Adrenal gland (tissue), 19 donors: ENCODE measurements at regions of chr5 and their contacts with region 1.

Region 1: GRCh38 chr5:168562279-168562678 is 16.9 kb downstream of the PANK3 start:
- DNase-seq: no peak
- H3K4me3 ChIP-seq: no peak overlapping the region
- H3K27ac ChIP-seq: peak overlapping the region in 1 of 5 donors; percentile 4
- H3K4me1 ChIP-seq: peaks cover 16 to 35% of the 10 kb centered on the region in 2 donors
- H3K27me3 ChIP-seq: no peaks in the 10 kb centered on the region
- CTCF ChIP-seq: no peak
- POLR2A ChIP-seq: no peak

Region 2: DNA sequence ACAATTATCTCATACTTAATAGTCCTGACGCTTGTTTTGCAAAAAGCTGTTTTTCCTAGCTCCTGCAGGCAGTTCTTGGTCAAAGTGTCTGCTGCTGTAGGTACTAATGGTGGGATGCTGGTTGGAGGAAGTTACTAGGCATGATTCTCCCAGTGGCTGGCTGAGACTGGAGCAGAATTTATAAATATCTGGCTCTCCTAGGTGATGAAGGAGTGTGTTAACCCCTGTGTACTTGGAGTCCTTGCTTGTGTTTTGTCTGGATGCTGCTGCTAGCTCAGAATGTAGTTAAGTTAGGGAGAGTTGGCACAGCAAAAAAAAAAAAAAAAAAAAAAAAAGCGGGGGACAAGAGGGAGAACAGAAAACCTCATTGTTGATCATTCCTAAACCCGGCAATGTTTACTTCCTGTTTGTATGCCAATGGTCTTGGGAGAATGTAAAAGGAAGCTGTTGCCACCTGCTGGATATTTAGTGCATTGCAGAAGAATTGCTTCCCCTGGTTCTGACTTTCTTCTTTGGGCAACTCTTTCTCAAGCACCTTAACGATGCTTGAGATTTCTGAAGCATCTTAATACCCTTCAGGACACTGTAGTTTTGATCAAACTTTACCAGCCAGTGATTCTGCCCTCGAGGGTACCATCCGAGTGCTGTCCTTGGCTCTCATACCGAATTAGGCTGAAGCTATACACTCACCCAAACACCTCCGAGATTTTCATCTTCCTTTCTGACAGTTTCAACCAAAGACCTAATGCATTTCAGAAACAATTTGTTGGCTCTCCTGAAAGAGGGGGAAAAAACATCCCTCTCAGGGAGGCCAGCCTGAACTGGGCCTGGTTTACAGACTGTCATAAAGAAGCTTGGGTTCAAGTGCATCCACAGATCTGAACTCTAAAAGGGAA is 342.5 kb before region 1 on chr5:
- intact Hi-C with region 1: no loop called
- DNase-seq: peak; percentile 42 to 83 (median 58)
- H3K4me3 ChIP-seq: no peak overlapping the region
- H3K27ac ChIP-seq: no peak overlapping the region
- H3K4me1 ChIP-seq: peaks cover 0 to 5% of the 10 kb centered on the region in 2 donors
- H3K27me3 ChIP-seq: no peaks in the 10 kb centered on the region
- CTCF ChIP-seq: peak; percentile 81 to 92 (median 86)
- POLR2A ChIP-seq: no peak

Region 3: GRCh38 chr5:168494057-168494555 is 68.2 kb before region 1 on chr5:
- intact Hi-C with region 1: loop called in 1 of 2 experiments (anchors 10 kb)
- DNase-seq: no peak
- H3K4me3 ChIP-seq: no peak overlapping the region
- H3K27ac ChIP-seq: no peak overlapping the region
- H3K4me1 ChIP-seq: no peaks in the 10 kb centered on the region
- H3K27me3 ChIP-seq: no peaks in the 10 kb centered on the region
- CTCF ChIP-seq: no peak
- POLR2A ChIP-seq: no peak